Gastrocnemius medialis (tissue), 4 donors: ENCODE measurements at regions of chr19 and their contacts with region 1.

Region 1: DNA sequence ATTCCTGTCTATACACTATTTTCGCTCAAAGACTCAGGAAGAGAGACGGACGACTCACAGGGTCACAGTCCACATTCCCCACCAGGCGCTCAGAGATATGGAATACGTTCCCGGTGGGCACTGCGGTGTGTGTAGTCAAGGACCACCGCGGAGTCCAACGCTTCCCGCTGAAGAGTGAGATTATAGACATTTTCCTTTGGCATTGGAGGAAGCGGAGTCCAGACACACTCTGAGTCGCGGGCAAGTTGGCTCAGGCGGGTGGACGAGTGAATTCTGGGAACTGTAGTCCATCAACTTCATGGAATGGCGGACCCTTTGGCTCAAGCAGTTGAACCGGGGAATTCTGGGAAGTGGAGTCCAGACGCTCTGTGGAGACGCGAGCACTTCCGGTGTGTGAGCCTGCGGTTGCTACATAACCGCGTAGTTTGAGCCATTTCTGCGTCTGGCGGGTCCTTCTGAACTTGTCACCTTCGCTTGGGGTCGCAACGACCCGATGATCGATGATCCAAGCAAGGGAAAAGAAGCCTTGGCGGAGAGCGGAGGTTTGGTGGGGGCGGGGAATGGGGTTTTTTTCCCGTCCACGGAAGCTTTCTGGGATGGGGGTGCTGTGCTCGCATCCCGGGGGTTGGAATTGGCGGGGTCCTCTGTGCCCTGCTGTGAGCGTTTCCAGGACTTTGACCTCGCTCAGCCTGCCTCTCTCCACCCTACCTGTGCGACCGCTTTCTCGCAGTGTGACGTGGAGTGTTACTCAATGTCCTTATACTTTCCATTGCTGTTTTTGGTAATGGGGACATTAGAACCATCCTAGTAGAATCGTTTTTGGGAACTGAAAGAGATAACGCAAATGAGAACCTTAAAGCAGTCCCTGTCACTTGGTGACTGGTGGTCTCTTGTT is at the start of gene ZNF230:
- DNase-seq: peak; percentile 90 to 92
- ATAC-seq: peak; percentile 100
- H3K4me3 ChIP-seq: peak within 1 kb of the TSS; percentile 67 to 88 (median 80)
- H3K27ac ChIP-seq: peak within 1 kb of the TSS; percentile 70 to 78 (median 74)
- H3K4me1 ChIP-seq: peaks cover 7 to 15% of the 10 kb centered on the region in 2 donors
- H3K27me3 ChIP-seq: no peaks in the 10 kb centered on the region
- CTCF ChIP-seq: no peak
- POLR2A ChIP-seq: no peak
- total RNA-seq, gene ZNF230: 0.78 to 4.5 (median 4.5) TPM in 3 of 4 donors, not detected in the other

Region 2: DNA sequence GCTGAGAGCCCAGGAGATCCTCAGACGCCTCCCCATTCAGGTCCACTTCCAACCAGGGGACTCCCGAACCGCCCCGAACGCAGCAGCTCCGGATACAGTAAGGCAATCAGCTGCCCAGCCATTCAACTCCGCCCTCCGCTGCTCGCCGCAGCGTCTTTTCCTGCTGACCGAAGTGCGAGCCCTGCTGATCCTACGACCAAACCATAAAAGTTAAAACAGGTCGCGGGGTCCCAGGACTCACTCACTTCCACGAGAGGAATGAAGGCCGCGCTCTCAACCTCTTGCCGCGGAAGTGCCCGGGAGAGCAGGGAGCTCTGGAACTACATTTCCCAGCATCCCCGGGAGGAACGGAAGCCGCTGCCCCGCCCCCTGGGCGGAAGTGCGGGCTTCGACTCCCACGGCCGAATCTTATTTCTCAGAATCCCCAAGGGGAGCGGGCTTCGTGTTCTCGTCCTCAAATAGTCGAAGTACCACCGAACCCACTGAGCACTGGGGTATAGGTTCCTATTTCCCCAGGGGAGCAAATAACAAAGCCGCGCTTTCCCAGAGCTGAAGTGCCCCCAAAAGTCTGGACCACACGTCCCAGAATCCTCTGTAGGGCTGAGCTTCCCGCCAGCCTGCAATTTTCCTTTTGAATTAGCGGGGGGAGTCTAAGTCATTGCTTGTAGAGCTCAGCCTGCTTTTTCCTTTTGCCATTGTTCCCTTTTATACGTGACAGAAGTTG is 67.7 kb before region 1 on chr19 and contains the start of gene ZNF45:
- in situ Hi-C with region 1: no loop called
- intact Hi-C with region 1: loop called (anchors 1 kb)
- DNase-seq: peak; percentile 80 to 83
- ATAC-seq: peak; percentile 98 to 99
- H3K4me3 ChIP-seq: peak within 1 kb of the TSS; percentile 52 to 78 (median 68)
- H3K27ac ChIP-seq: peak within 1 kb of the TSS; percentile 71 to 87 (median 77)
- H3K4me1 ChIP-seq: peaks cover 14 to 17% of the 10 kb centered on the region in 2 donors
- H3K27me3 ChIP-seq: no peaks in the 10 kb centered on the region
- CTCF ChIP-seq: no peak
- POLR2A ChIP-seq: no peak
- total RNA-seq, gene ZNF45: 2.8 to 7.7 (median 4.0) TPM

Region 3: GRCh38 chr19:43983912-43984686 is 18.7 kb before region 1 on chr19 and contains the start of gene ZNF155:
- in situ Hi-C with region 1: no loop called
- intact Hi-C with region 1: loop called (anchors 1 kb)
- DNase-seq: peak; percentile 90 to 94
- ATAC-seq: peak; percentile 100
- H3K4me3 ChIP-seq: peak within 1 kb of the TSS; percentile 63 to 85 (median 76)
- H3K27ac ChIP-seq: peak within 1 kb of the TSS; percentile 77 to 83 (median 80)
- H3K4me1 ChIP-seq: peaks cover 0 to 5% of the 10 kb centered on the region in 2 donors
- H3K27me3 ChIP-seq: no peaks in the 10 kb centered on the region
- CTCF ChIP-seq: no peak
- POLR2A ChIP-seq: no peak
- total RNA-seq, gene ZNF155: 0.97 to 2.0 (median 1.6) TPM

Region 4: DNA sequence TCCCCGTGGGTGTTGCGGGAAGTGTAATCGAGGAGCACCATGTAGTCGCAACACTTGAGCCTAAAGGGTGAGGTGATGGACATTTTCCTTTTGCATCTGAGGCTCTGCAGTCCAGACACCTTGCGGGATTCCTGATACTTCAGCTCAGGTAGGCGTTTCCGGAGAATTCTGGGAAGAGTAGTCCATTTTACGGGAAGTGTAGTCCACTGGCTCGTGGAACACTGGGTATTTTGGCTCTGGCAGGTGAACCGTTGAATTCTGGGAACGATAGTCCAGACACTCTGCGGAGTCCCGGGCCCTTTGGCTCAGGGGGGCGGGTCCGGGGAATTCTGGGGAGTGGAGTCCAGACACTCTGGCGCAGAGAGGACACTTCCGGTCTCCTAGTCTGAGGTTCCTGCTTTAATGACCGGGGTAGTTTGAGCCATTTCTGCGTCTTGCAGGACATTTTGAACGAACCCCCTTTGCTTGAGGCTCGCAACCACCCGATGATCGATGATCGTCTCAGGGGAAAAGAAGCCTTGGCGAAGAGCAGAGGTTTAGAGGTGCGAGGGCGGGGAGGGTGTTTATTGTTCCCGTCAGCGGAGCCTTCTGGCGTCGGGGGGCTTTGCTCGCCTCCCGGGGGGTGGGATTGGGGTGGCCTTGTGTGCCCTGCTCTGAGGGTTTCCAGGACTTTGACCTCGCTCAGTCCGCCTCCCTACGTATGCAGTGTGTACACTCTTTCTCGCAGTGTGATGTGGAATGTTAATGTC is 49.0 kb after region 1 on chr19 and contains the start of gene ZNF223:
- in situ Hi-C with region 1: loop called in 1 of 4 experiments (anchors 10 kb)
- intact Hi-C with region 1: loop called (anchors 1 kb)
- DNase-seq: peak; percentile 94
- ATAC-seq: peak; percentile 100
- H3K4me3 ChIP-seq: peak within 1 kb of the TSS; percentile 72 to 84 (median 81)
- H3K27ac ChIP-seq: peak within 1 kb of the TSS; percentile 73 to 81 (median 78)
- H3K4me1 ChIP-seq: peaks cover 12 to 18% of the 10 kb centered on the region in 2 donors
- H3K27me3 ChIP-seq: peaks cover 0 to 25% (median 5%) of the 10 kb centered on the region in 3 donors
- CTCF ChIP-seq: no peak
- POLR2A ChIP-seq: no peak
- total RNA-seq, gene ZNF223: 0.56 to 3.0 (median 0.91) TPM in 3 of 4 donors, not detected in the other

Region 5: DNA sequence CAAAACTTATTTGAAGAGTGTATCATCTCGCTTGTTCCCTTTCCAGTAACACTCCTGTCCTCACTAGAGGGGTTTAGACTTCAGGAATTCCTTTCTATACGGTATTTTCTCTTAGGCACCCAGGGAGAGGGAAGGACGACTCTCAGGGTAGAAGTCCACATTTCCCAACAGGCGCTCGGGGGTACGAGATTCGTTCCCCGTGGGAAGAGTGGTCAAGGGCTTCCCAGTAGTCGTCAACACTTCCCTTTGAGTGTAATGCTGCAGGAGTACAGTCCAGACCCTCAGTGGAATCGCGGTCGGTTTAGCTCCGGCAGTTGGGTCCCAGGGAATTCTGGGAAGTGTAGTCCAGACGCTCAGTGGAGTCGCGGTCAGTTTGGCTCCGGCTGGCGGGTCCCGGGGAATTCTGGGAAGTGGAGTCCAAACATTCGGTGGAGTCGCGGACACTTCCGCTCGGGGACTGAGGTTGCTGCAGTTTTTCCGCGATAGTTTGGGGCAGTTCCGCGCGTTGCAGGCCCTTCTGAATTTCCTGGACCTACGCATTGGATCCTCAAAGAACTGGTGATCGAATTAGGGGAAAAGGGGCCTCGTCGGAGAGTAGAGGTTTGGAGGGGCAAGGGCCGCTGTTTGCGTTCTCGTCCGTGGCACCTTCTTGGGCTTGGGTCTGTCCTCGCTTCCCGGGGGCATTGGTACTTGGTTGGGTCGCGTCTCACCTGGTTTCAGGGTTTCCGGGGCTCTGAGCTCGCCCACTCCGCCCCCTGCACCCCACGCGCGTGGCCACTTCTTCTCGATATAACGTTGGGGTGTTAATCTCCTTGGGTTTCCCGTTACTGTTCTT is 91.3 kb after region 1 on chr19 and contains the start of gene ZNF224:
- in situ Hi-C with region 1: loop called in 1 of 4 experiments (anchors 10 kb)
- intact Hi-C with region 1: loop called (anchors 1 kb)
- DNase-seq: peak; percentile 85 to 87
- ATAC-seq: peak; percentile 100
- H3K4me3 ChIP-seq: peak within 1 kb of the TSS; percentile 76 to 91 (median 80)
- H3K27ac ChIP-seq: peak within 1 kb of the TSS; percentile 70 to 82 (median 73)
- H3K4me1 ChIP-seq: peaks cover 7 to 10% of the 10 kb centered on the region in 2 donors
- H3K27me3 ChIP-seq: no peaks in the 10 kb centered on the region
- CTCF ChIP-seq: no peak
- POLR2A ChIP-seq: peak in 1 of 2 donors; percentile 41
- total RNA-seq, gene ZNF224: 4.9 to 14.1 (median 6.9) TPM

Region 6: DNA sequence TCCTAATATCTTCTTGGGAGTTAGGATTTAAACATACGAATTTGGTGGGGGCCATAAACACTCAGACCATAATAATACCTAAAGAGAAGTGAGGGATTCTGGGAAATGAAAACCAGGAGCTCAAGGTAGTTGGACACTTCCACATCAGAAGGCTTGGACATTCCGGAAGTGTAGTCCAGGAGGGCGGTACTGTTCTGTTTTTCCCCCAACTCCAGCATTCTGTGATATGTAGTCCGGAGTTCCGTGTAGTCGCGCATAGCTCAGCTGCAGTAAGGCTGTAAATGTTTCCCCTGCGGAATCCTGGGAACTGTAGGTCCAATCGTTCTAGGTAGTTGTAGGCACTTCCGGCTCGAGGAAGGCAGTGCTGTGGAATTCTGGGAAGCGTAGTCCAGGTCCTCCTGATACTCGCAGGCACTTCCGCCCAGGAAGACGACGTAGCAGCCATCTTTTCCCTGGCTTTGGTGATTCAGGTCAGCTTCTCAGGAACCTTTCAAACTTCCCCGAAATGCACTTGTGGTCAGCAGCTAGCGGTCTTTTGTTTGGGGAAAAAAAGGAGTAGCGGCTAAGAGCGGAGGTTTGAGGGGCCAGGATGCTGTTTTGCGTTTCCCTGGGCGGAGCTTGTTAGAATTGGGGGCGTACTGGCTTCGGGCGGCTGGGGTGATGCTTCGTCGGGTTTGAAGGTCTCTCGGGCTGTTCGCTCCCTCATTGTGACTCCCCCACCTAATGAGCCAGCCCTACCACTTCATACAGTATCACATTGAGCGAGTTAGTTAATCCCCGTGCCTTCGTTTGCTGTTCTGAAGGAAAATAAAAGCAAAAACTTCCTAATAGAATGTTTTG is 162.1 kb after region 1 on chr19 and contains the start of gene ZNF226:
- in situ Hi-C with region 1: no loop called
- intact Hi-C with region 1: loop called (anchors 1 kb)
- DNase-seq: peak; percentile 94
- ATAC-seq: peak; percentile 100
- H3K4me3 ChIP-seq: peak within 1 kb of the TSS; percentile 86 to 95 (median 88)
- H3K27ac ChIP-seq: peak within 1 kb of the TSS; percentile 79 to 86 (median 84)
- H3K4me1 ChIP-seq: peaks cover 7 to 13% of the 10 kb centered on the region in 2 donors
- H3K27me3 ChIP-seq: no peaks in the 10 kb centered on the region
- CTCF ChIP-seq: no peak
- POLR2A ChIP-seq: peak in 1 of 2 donors; percentile 53
- total RNA-seq, gene ZNF226: 3.2 to 6.9 (median 3.8) TPM

Region 7: GRCh38 chr19:44228318-44228717 is 225.5 kb after region 1 on chr19:
- in situ Hi-C with region 1: no loop called
- intact Hi-C with region 1: no loop called
- DNase-seq: no peak
- ATAC-seq: no peak
- H3K4me3 ChIP-seq: no peak overlapping the region
- H3K27ac ChIP-seq: no peak overlapping the region
- H3K4me1 ChIP-seq: no peaks in the 10 kb centered on the region
- H3K27me3 ChIP-seq: no peaks in the 10 kb centered on the region
- CTCF ChIP-seq: no peak
- POLR2A ChIP-seq: no peak

Region 8: DNA sequence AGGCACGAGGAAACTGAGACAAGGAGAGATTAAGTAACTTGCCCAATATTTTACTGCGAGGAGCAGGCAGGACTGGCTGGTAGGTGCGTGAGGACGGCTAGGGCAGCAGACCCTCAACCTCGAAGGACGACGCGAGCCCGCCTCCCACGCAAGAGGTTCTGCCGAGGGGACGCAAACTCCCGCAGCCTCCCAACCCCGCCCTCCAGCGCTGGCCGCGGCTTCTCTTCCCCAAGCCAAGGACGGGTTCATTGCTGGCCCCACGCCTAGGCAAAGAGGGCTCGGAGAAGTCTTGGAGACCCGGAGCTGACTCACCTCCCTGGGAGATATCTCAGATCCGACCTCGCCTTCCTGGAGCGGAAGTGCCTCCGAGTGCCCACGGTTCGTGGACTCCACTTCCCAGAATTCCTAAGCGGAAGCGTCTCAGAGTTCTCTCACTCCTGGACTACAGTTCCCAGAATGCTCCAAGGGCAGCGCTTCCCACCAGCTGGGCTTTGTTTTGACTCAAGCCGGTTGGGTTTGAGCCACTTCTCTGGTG is 301.9 kb after region 1 on chr19 and contains the start of gene ZNF235:
- in situ Hi-C with region 1: no loop called
- intact Hi-C with region 1: loop called (anchors 2 kb)
- DNase-seq: peak; percentile 88 to 94
- ATAC-seq: peak; percentile 100
- H3K4me3 ChIP-seq: peak within 1 kb of the TSS; percentile 64 to 86 (median 78)
- H3K27ac ChIP-seq: peak within 1 kb of the TSS; percentile 77 to 87 (median 82)
- H3K4me1 ChIP-seq: peaks cover 3 to 12% of the 10 kb centered on the region in 2 donors
- H3K27me3 ChIP-seq: no peaks in the 10 kb centered on the region
- CTCF ChIP-seq: no peak
- POLR2A ChIP-seq: peak in 1 of 2 donors; percentile 42
- total RNA-seq, gene ZNF235: 1.9 to 3.3 (median 2.1) TPM

Region 9: DNA sequence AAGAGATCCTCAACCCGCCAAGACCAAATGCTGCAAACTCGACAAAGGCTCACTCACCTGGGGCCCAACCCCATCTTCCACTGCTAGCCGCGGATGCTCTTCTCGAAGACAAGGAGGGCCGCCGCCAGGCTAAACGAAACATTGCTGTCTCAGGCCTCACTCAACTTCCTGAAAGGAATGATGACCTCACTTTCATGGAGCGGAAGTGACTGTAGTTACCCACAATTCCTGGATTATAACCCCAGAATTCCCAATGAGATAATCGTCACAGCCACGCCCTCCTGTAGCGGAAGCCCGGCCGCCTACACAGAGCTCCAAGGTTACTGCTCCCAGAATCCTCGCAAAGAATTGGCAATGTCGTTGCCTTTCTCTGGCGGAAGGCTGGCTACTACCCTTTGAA is 364.2 kb after region 1 on chr19:
- in situ Hi-C with region 1: no loop called
- intact Hi-C with region 1: no loop called
- DNase-seq: no peak
- ATAC-seq: no peak
- H3K4me3 ChIP-seq: no peak overlapping the region
- H3K27ac ChIP-seq: no peak overlapping the region
- H3K4me1 ChIP-seq: no peaks in the 10 kb centered on the region
- H3K27me3 ChIP-seq: no peaks in the 10 kb centered on the region
- CTCF ChIP-seq: no peak
- POLR2A ChIP-seq: no peak